PC-3 (cell line): ENCODE measurements at regions of chr2 and their contacts with region 1.

Region 1: GRCh38 chr2:95115418-95115817 is 6.2 kb downstream of the MRPS5 start:
- DNase-seq: peak; percentile 72
- ATAC-seq: peak; percentile 99
- H3K4me3 ChIP-seq: no peak overlapping the region
- H3K27ac ChIP-seq: no peak overlapping the region
- H3K4me1 ChIP-seq: peaks cover 19% of the 10 kb centered on the region
- H3K27me3 ChIP-seq: no peaks in the 10 kb centered on the region
- CTCF ChIP-seq: peak; percentile 85

Region 2: GRCh38 chr2:95076784-95077529 is 38.5 kb before region 1 on chr2:
- CTCF ChIA-PET with region 1: interaction called, 7 read pairs
- POLR2A ChIA-PET with region 1: no interaction called
- intact Hi-C with region 1: loop called (anchors 2 kb)
- DNase-seq: peak; percentile 93
- ATAC-seq: peak; percentile 92
- H3K4me3 ChIP-seq: peak overlapping the region; percentile 84
- H3K27ac ChIP-seq: no peak overlapping the region
- H3K4me1 ChIP-seq: peaks cover 10% of the 10 kb centered on the region; the same call in 1 of the 2 replicates
- H3K27me3 ChIP-seq: no peaks in the 10 kb centered on the region
- CTCF ChIP-seq: peak; percentile 89

Region 3: DNA sequence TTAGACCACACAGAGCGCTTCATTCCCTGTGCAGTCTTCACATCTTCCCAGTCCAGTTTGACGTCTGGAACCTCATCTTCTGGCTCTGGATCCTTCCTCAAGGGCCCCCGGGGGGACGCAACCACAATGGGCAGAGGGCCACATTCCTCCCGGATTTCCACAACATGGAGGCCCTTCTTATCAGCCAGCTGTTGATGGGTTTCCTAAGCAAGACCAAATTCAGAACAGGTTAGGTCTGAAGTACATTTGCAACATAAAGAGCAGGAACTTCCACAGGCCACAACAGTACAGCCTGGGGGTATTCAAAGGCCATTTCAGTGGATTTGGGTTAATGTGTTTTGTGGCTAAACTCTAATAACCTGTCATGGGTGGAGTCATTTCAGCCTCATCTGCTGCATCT is 28.0 kb before region 1 on chr2:
- CTCF ChIA-PET with region 1: no interaction called
- POLR2A ChIA-PET with region 1: no interaction called
- intact Hi-C with region 1: no loop called
- DNase-seq: no peak
- ATAC-seq: no peak
- H3K4me3 ChIP-seq: no peak overlapping the region
- H3K27ac ChIP-seq: no peak overlapping the region
- H3K4me1 ChIP-seq: no peaks in the 10 kb centered on the region
- H3K27me3 ChIP-seq: no peaks in the 10 kb centered on the region
- CTCF ChIP-seq: no peak

Region 4: GRCh38 chr2:95159690-95160449 is 44.5 kb after region 1 on chr2 and contains the start of gene ZNF514:
- CTCF ChIA-PET with region 1: no interaction called
- POLR2A ChIA-PET with region 1: no interaction called
- intact Hi-C with region 1: no loop called
- DNase-seq: peak; percentile 69
- ATAC-seq: peak; percentile 84
- H3K4me3 ChIP-seq: peak within 1 kb of the TSS; percentile 88
- H3K27ac ChIP-seq: no peak within 1 kb of the TSS
- H3K4me1 ChIP-seq: peaks cover 20% of the 10 kb centered on the region
- H3K27me3 ChIP-seq: no peaks in the 10 kb centered on the region
- CTCF ChIP-seq: no peak
- total RNA-seq, gene ZNF514: 5.8 and 6.6 TPM in 2 replicates